WTC11 (cell line): ENCODE measurements at regions of chr1 and their contacts with region 1.

Region 1: GRCh38 chr1:42736150-42736850 is 3.7 kb downstream of the CLDN19 start:
- DNase-seq: peak; percentile 55
- ATAC-seq: peak; percentile 16
- H3K4me3 Mint-ChIP-seq: no peak overlapping the region
- H3K27ac Mint-ChIP-seq: peak overlapping the region; percentile 15; the same call in 1 of the 2 replicates
- H3K4me1 Mint-ChIP-seq: peaks cover 32% of the 10 kb centered on the region
- H3K27me3 Mint-ChIP-seq: no peaks in the 10 kb centered on the region
- CTCF ChIP-seq: no peak

Region 2: GRCh38 chr1:42756956-42757891 is 20.9 kb after region 1 on chr1:
- CTCF ChIA-PET with region 1: interaction called, 22 read pairs
- POLR2A ChIA-PET with region 1: interaction called, 3 read pairs
- DNase-seq: no peak
- ATAC-seq: peak; percentile 77
- H3K4me3 Mint-ChIP-seq: no peak overlapping the region
- H3K27ac Mint-ChIP-seq: no peak overlapping the region
- H3K4me1 Mint-ChIP-seq: peaks cover 2% of the 10 kb centered on the region
- H3K27me3 Mint-ChIP-seq: no peaks in the 10 kb centered on the region
- CTCF ChIP-seq: peak; percentile 43

Region 3: GRCh38 chr1:42784946-42785693 is 48.8 kb after region 1 on chr1 and contains the start of gene TMEM269:
- CTCF ChIA-PET with region 1: no interaction called
- POLR2A ChIA-PET with region 1: no interaction called
- DNase-seq: peak; percentile 16
- ATAC-seq: peak; percentile 28
- H3K4me3 Mint-ChIP-seq: no peak within 1 kb of the TSS
- H3K27ac Mint-ChIP-seq: no peak within 1 kb of the TSS
- H3K4me1 Mint-ChIP-seq: peaks cover 8% of the 10 kb centered on the region
- H3K27me3 Mint-ChIP-seq: no peaks in the 10 kb centered on the region
- CTCF ChIP-seq: no peak
- total RNA-seq, gene TMEM269: 0.57 to 0.85 TPM (median 0.73 TPM) in 3 replicates

Region 4: DNA sequence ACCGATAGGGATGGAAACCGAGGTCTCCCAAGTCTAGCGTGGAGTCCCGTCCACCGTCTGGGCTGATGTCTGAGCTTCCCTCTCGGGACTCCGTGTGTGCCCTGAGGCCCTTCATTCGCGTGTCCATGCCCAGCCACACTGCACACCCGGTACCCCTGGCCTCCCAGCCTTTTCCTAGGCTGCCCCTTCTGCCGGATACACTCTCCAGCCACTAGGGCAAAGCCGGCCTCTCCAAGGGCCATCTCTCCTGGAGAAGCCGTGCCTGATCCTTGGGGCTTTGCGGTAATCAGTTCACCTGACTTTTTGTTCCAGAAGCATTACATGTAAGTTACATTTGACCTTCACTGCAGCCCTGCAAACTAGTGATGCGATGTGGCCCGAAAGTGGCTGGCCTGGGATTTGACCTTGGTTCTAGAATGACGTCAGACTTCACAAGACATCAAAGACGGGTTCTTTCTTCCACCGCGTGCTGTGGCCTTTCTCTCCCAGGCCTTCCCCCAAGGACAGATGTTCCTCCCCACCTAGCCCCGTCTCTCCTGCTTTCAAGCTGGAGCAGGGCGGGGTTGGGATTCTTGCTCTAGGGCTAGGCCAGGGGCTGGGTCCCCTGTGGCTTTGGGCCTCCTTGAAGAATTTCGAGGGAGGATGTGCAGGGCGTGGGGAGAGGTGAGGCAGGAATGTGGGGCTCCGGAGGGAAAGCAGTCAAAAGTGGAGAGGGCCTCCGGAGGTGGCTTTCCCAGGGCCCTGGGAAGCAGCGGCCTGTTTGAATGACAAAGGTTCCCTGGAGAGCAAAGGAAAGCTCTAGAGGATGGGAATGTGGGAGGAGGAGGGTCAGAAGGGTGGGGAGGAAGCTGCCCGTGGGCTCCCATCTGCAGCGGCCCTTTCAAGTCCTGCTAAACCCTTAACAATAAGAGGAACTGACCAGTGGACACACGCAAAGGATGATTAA is 272.1 kb after region 1 on chr1:
- CTCF ChIA-PET with region 1: no interaction called
- POLR2A ChIA-PET with region 1: no interaction called
- DNase-seq: peak; percentile 97
- ATAC-seq: peak; percentile 85
- H3K4me3 Mint-ChIP-seq: peak overlapping the region; percentile 61
- H3K27ac Mint-ChIP-seq: peak overlapping the region; percentile 100
- H3K4me1 Mint-ChIP-seq: peaks cover 66% of the 10 kb centered on the region
- H3K27me3 Mint-ChIP-seq: no peaks in the 10 kb centered on the region
- CTCF ChIP-seq: no peak